Head of caudate nucleus (tissue), 42 donors: ENCODE measurements at regions of chr7 and their contacts with region 1.

Region 1: DNA sequence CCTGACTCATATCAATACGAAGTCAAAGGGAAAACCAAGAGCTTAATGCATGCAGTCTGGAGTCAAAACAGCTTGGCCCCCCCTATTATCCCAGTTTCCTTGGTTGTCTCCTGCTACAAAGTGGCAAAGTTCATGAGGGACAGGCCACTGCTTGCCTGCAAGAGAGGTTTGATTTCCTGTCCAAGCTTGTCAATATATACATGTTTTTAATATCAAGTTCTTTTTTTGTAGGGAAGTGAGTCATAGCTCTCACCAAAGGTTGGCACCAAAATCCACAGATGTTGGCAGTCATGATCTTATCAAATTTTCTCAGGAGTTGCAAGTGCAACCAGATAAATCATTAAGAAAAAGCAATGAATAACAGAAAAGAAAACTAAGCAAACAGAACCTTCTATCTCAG is 176.8 kb downstream of the COBL start:
- DNase-seq: peak in 2 of 42 donors; percentile 24 to 31

Region 2: DNA sequence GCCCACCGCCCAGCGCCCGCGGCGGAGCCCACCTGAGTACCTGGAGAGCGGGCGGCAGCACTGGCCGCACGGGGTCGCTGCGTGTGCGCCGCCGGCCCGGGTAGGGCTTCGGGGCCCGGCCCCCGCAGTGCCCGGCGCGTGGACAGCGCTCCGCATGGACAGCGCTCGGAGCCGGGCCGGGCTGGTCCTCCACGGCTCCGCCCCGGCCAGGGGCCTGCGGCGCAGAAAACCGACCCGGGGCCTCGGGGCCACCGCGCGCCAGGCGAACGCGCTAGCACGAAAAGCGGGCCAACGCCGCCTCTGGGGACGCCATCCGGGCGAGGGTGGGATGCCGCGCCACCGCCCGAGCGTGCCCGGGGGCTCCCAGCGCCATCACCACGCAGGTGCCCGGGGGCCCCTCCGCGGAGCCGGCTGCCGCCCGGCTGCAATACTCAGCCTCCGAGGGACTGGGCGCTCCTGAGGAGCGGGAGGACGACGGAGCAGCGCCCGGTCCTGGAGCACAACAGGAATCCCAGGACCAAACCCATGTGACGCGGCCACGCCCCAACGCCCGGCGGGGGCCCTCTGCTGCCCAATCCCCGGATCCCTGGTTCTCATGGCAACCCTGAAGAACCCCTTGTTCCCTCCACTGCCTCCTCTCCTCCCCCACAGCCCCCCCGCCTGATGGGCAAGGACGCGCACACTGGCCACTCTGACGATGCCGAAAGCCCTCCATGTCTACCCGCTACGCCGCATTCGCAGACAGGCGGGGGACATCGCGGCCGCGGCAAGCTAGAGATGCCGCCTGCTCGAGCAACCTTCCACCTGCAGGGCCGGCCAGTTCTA is 357.2 kb before region 1 on chr7 and contains the start of gene GRB10:
- intact Hi-C with region 1: loop called (anchors 10 kb)
- DNase-seq: peak; percentile 78 to 95 (median 87)

Region 3: GRCh38 chr7:50908628-50909290 is 231.0 kb before region 1 on chr7:
- intact Hi-C with region 1: no loop called
- DNase-seq: no peak

Region 4: GRCh38 chr7:51242007-51242691 is 102.4 kb after region 1 on chr7:
- intact Hi-C with region 1: no loop called
- DNase-seq: peak in 5 of 42 donors; percentile 0 to 25 (median 5)